ENCODE measurements at regions of chr20 and their contacts with region 1.

Region 1: DNA sequence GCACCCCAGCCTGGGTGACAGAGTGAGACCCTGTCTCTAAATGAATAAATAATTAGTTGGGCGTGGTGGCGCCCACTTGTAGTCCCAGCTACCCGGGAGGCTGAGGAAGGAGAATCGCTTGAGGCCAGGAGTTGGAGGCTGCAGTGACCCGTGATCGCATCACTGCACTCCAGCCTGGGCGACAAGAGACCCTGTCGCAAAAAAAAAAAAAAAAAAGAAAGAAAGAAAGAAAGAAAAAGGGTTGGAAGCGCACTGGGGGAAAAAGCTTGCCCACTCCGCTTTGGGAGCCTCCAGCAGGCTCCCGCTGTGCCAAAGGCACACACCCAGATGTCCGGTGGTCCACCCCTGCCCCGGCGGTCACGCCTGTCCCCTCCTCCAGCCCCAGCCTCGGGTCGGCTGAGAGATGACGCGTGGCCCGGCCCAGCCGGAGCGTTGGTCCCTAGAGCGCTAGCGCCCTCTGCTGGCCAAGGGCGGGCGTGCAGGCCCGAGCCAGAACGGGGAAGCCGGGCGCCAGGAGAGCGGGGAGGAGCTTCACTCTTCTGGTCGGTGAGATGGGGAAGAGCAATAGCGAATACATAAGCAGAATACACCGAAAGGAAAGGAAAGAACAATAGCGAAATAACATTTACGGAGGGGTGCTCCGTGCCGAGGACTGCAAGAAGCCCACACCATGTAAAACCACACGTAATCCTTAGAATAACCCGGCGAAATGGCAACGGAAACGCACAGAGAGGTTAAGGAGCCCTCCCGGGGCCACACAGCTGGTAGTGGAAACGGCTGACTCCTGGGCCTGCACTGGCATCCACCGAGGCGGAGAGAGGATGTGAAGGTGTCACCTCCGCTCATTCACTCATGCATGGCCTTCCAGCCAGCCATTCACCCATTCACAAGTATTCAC is 41.7 kb downstream of the UBE2V1 start:
- DNase-seq: peak; percentile 94
- CTCF ChIP-seq: peak; percentile 100

Region 2: DNA sequence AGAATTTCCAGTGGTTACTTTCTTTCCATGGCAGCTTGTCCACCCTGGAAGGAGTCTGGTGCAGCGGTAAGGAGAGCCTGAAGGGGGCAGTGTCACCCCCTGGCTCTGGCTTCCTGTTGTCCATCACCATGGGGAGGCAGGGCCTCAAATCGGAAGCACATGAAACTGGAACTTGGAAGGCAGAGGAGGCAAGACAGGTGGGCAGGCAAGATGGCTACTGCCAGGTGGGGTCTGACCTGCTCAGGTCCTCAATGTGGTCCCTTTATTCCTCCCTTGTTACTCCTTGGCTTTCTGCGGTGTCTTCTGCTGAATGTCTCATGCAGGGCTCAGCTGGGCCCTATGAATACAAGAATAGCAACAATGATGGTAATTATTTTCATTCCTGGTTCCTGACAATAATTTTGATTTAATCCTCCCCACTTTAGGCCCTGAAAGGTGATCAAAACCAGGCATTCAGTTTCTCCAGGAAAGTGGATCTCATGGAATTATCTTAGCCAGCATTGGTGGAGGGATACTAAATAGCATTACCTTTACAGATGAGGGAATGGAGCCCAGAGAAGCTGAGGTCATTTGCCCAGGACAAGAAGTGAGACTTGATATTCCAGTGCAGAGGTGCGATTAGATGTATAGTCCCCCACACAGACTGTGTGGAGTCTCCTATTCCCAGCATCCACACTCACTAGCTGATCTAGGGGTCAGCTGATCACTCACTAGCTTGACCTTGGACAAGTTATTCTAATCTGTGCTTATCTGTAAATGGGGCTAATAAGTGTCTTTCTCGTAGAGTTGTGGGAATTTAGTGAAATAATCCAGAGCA is 106.1 kb before region 1 on chr20:
- CTCF ChIA-PET with region 1: interaction called, 24 read pairs
- POLR2A ChIA-PET with region 1: no interaction called
- DNase-seq: peak; percentile 58
- CTCF ChIP-seq: peak; percentile 43

Region 3: DNA sequence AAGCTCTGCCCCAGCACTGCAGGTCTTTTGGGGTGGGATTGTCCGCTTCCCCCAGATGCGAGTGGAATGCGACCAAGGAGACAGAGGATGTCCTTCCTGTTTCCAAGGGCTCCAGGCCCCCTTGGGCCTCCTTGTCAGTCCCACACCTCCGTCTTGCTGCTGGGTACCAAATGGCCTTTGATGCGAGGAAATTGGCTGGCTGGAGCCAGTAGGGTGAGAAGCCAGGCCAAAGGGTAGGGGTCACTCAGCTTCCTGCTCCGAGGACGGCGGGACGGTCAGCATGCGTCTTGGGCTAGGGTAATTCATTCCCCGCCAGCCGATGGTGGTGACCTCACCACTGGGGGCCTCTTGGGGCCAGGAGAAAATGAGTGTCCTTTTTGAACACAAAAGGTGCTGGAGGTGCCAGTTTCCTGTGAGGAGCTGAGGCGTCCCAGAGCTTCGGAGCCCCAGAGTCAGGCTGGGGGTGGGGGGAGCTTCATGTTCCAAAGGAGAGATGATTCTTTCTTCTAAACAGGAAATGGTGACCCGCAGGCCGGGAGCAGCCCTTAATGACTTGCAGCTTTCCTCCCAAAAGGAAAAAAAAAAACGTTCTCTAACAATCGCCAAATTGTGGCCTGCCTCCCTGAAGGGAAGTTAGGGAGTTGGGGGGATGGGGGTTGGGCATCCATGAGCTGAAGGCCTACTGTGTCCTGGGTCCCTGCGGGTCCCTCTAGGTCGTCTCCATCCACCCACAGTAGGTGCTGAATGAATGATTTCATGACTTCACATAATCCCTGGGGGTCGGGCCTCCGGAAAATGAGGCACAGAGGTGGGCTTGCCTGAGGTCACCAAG is 81.8 kb before region 1 on chr20:
- CTCF ChIA-PET with region 1: interaction called, 331 read pairs
- POLR2A ChIA-PET with region 1: no interaction called
- DNase-seq: no peak
- CTCF ChIP-seq: no peak

Region 4: GRCh38 chr20:50038574-50039012 is 32.6 kb before region 1 on chr20:
- CTCF ChIA-PET with region 1: interaction called, 15 read pairs
- POLR2A ChIA-PET with region 1: no interaction called
- DNase-seq: no peak
- CTCF ChIP-seq: no peak

Region 5: DNA sequence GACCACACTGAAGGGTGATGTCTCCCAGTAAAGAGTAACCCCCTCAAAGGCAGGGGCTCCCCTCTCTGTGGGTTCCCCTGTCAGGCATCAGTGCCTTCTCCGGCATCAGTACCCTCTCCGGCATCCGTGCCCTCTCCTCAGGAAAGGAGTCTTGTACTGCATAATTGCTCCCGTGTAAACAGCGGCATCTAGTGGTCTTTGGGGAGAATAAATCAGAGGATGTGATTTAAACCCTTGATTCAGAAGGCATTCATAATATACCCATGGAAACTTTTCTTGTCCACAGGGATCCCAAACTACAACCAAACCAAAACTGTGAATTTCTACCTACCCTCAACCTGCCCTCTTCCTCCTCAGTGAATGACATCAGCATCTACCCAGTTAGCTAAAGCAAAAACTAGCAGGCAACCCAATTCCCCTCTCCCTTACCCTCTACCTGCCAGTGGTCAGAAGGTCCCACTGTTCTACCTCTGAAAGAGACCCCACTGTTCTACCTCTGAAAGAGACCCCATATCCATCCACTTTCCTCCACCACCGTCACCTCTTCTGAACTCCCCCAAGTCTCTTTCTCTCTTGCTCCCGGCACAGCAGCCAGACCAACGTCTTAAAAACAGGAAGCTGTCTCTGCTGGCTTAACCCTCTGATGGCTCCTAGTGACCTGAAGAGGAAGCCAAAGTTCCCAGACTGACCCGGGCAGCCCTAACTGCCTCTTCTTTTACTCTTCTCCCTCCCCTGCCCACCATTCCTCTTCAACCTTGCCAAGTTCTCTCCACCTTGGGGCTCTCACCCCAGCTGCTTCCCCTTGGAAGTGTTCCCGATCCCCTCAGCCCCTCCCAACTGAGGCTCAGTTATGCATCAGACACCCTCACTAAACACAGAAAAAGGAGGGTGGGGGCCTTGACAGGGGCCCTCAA is 14.5 kb after region 1 on chr20:
- CTCF ChIA-PET with region 1: interaction called, 124 read pairs
- POLR2A ChIA-PET with region 1: no interaction called
- DNase-seq: peak; percentile 72
- CTCF ChIP-seq: peak; percentile 77

Region 6: GRCh38 chr20:50165684-50166554 is 94.7 kb after region 1 on chr20:
- CTCF ChIA-PET with region 1: interaction called, 33 read pairs
- POLR2A ChIA-PET with region 1: no interaction called
- DNase-seq: peak; percentile 90
- CTCF ChIP-seq: no peak

Measured in GM10248 (cell line).